ENCODE measurements at regions of chr7 and their contacts with region 1.

Region 1: GRCh38 chr7:33895025-33895804 is 10.1 kb upstream of the BMPER start:
- DNase-seq: peak; percentile 41
- ATAC-seq: peak; percentile 99
- H3K4me3 ChIP-seq: no peak overlapping the region
- H3K27ac ChIP-seq: no peak overlapping the region
- H3K4me1 ChIP-seq: no peaks in the 10 kb centered on the region
- H3K27me3 ChIP-seq: peaks cover 2 to 42% of the 10 kb centered on the region in 2 experiments; a peak in 2 of 5 replicates
- CTCF ChIP-seq: peak; percentile 89
- EP300 ChIP-seq: no peak
- POLR2A ChIP-seq: no peak
- RAD21 ChIP-seq: no peak

Region 2: GRCh38 chr7:33757562-33758165 is 137.6 kb before region 1 on chr7:
- CTCF ChIA-PET with region 1: interaction called, 5 read pairs
- POLR2A ChIA-PET with region 1: no interaction called
- in situ Hi-C with region 1: no loop called
- intact Hi-C with region 1: loop called (anchors 2 kb)
- DNase-seq: peak; percentile 16
- ATAC-seq: no peak
- H3K4me3 ChIP-seq: no peak overlapping the region
- H3K27ac ChIP-seq: no peak overlapping the region
- H3K4me1 ChIP-seq: no peaks in the 10 kb centered on the region
- H3K27me3 ChIP-seq: no peaks in the 10 kb centered on the region
- CTCF ChIP-seq: peak; percentile 50
- EP300 ChIP-seq: no peak
- POLR2A ChIP-seq: no peak
- RAD21 ChIP-seq: no peak

Region 3: DNA sequence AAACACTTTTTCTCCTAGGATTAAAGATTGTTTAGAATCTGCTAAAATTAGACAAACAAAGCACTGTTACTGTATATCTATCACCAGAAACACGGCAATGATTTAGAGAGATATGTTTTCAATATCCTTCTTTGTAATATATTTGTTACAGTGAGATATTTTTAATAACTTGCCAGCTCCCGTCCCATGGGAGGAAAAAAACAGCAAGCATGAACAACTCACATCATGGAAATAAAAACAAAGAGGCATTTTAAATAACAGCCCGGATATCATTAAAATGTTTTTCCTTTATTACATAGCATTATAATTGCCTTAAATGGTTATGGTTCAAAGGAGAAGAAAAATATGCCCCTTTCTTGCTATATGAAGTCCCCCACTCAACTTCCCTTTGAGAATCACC is 282.3 kb after region 1 on chr7:
- CTCF ChIA-PET with region 1: no interaction called
- POLR2A ChIA-PET with region 1: no interaction called
- in situ Hi-C with region 1: no loop called
- intact Hi-C with region 1: no loop called
- DNase-seq: no peak
- ATAC-seq: no peak
- H3K4me3 ChIP-seq: no peak overlapping the region
- H3K27ac ChIP-seq: no peak overlapping the region
- H3K4me1 ChIP-seq: no peaks in the 10 kb centered on the region
- H3K27me3 ChIP-seq: peaks cover 0 to 6% of the 10 kb centered on the region in 2 experiments; a peak in 1 of 5 replicates
- CTCF ChIP-seq: no peak
- EP300 ChIP-seq: no peak
- POLR2A ChIP-seq: no peak
- RAD21 ChIP-seq: no peak

Measured in HepG2 (cell line).